ENCODE measurements at regions of chr4 and their contacts with region 1.

Region 1: GRCh38 chr4:119628308-119629141 is at the start of gene PDE5A:
- DNase-seq: peak; percentile 94 to 96 (median 95)
- H3K4me3 ChIP-seq: peak within 1 kb of the TSS; percentile 80 to 87 (median 86)
- H3K27ac ChIP-seq: peak within 1 kb of the TSS; percentile 74 to 81
- H3K4me1 ChIP-seq: peaks cover 0 to 5% (median 0%) of the 10 kb centered on the region in 3 donors
- H3K27me3 ChIP-seq: no peaks in the 10 kb centered on the region
- CTCF ChIP-seq: peak; percentile 82
- total RNA-seq, gene PDE5A: 29.4 TPM

Region 2: GRCh38 chr4:119314356-119314755 is 314.2 kb before region 1 on chr4:
- intact Hi-C with region 1: loop called (anchors 10 kb)
- DNase-seq: peak in 3 of 5 donors; percentile 35 to 80 (median 70)
- H3K4me3 ChIP-seq: no peak overlapping the region
- H3K27ac ChIP-seq: no peak overlapping the region
- H3K4me1 ChIP-seq: no peaks in the 10 kb centered on the region
- H3K27me3 ChIP-seq: no peaks in the 10 kb centered on the region
- CTCF ChIP-seq: peak; percentile 57

Measured in kidney (tissue), 22 donors.